ENCODE measurements at regions of chr21 and their contacts with region 1.

Region 1: DNA sequence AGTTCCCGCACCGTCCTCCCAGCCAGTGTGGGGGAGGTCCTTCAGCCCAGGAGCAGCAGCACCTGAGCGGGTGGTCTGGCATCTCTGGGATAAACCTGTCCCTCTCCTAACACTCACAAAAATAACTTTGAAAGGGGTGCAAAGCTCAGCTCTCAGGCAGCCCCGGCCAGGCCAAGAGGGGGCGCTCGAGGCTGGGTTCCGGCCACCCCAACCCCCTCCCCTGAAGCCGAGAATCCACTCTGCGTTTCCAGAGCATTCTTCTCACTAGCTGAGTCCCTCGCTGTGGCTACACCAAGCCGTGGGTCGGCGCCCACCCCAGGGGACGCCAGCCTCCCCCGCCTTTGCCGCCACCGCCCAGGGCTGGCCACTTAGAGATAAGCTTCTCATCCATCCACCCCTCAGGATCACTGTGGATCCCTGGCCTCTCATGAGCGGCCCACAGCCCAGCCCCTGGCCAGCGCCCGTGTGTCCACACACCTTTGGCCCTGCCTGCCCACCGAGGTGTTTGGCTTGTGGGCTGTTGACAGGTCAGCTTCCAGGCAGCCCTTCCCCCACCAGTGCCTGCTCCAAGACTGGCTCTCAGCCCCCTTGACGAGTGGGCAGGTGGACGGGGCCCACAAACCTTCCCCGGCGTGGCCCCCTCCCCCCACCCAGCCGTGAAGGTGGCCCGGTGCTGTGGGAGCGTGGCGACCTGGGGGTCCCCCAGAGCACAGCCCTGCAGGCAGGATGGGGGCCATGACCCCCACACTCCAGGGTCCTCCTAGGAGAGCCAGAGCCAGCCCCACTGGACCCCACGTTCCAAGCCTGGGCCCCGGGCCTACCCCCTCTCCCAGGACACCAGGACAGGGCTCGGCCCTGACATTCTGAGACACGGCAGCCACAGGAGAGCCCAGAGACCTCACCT is 1.9 kb downstream of the FTCD start:
- DNase-seq: peak; percentile 88

Region 2: GRCh38 chr21:46210378-46211136 is 57.1 kb after region 1 on chr21:
- intact Hi-C with region 1: loop called in 1 of 2 experiments (anchors 10 kb)
- DNase-seq: peak; percentile 48

Region 3: DNA sequence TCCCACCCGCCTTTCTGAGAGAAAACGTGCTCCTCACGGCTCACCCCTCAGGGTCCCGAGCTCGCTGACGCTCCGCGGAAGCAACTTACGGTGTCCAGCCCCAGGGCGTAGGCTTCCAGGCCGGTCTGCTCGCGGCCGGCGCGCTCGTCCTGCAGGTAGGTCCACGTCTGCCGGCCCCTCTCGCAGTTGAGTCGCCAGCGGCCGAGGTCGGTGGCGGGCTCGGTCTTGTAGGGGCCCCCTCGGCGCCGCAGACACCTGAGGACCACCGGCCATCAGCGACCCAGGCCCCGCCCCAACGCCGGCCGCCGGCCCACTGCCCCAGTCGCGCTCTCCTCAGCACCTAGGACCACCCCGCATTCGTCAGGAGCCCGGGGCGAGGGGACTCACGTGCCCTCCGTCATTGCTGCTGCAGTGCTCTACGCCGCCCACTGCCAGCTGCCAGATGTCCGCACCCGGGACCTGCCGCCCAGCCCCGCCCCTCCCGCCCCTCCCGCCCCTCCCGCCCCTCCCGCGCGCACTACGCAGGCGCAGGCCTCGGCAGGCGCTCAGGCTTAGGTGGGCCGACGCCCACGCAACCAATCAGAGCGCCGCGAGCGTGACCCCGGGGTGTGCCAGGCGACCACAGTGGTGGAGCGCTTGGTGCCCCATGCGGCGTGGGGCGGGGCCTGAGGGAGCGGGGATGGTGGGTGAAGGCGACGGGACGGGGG is 75.0 kb after region 1 on chr21 and contains the start of gene LSS:
- intact Hi-C with region 1: loop called in 1 of 2 experiments (anchors 10 kb)
- DNase-seq: peak; percentile 100
- total RNA-seq, gene LSS: 42.5 to 65.0 TPM

Region 4: GRCh38 chr21:46264690-46265144 is 111.2 kb after region 1 on chr21:
- intact Hi-C with region 1: no loop called
- DNase-seq: no peak

Region 5: DNA sequence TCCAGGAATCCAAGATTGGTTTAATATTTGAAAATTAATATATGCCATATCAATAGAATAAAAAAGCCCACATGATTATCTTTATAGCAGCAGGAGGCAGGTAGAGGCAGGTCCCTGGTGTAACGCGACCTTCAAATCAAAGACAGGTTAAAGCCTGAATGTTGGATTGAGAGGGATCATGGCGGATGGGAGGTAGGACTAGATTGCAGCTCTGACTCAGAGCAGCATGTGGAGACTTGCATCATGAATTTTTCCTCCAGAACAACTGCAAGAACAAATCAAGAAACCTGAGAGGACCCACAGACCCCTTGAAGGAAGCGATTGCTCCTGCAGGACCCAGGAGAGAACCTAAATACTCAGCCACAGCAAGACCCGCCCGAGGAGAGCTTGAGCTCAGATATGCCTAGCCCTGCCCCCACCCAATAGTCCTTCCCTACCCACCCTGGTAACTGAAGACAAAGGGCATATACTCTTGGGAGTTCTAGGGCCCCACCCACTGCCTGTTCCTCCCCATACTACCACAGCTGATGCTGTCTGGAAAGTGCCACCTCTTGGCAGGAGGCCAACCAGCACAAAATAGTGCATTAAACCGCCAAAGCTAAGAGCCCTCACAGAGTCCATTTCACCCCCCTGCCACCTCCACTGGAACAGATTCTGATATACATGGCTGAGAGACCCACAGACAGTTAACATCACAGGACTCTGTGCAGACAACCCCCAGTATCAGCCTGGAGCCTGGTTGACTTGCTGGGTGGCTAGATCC is 431.9 kb after region 1 on chr21:
- intact Hi-C with region 1: no loop called
- DNase-seq: no peak